ENCODE measurements at regions of chr15 and their contacts with region 1.

Region 1: GRCh38 chr15:49235446-49236124 is 65.5 kb downstream of the GALK2 start:
- DNase-seq: peak in 1 of 2 donors; percentile 59
- ATAC-seq: peak; percentile 87
- H3K4me3 ChIP-seq: no peak overlapping the region
- H3K27ac ChIP-seq: no peak overlapping the region
- H3K4me1 ChIP-seq: no peaks in the 10 kb centered on the region
- H3K27me3 ChIP-seq: no peaks in the 10 kb centered on the region

Region 2: GRCh38 chr15:49421991-49422390 is 186.4 kb after region 1 on chr15:
- intact Hi-C with region 1: loop called (anchors 5 kb)
- DNase-seq: peak; percentile 53 to 73
- ATAC-seq: peak; percentile 87
- H3K4me3 ChIP-seq: peak overlapping the region in 1 of 2 donors; percentile 34
- H3K27ac ChIP-seq: no peak overlapping the region
- H3K4me1 ChIP-seq: no peaks in the 10 kb centered on the region
- H3K27me3 ChIP-seq: no peaks in the 10 kb centered on the region

Region 3: GRCh38 chr15:49620658-49621368 is 385.2 kb after region 1 on chr15 and contains the starts of genes DTWD1 and FAM227B:
- intact Hi-C with region 1: no loop called
- DNase-seq: peak; percentile 98 to 99
- ATAC-seq: peak; percentile 100
- H3K4me3 ChIP-seq: peak within 1 kb of the TSS; percentile 86 to 92
- H3K27ac ChIP-seq: peak within 1 kb of the TSS; percentile 79 to 86
- H3K4me1 ChIP-seq: peaks cover 0 to 4% of the 10 kb centered on the region in 2 donors
- H3K27me3 ChIP-seq: no peaks in the 10 kb centered on the region
- total RNA-seq, gene DTWD1: 30.0 to 54.4 TPM
- total RNA-seq, gene FAM227B: 4.2 to 4.8 TPM

Region 4: DNA sequence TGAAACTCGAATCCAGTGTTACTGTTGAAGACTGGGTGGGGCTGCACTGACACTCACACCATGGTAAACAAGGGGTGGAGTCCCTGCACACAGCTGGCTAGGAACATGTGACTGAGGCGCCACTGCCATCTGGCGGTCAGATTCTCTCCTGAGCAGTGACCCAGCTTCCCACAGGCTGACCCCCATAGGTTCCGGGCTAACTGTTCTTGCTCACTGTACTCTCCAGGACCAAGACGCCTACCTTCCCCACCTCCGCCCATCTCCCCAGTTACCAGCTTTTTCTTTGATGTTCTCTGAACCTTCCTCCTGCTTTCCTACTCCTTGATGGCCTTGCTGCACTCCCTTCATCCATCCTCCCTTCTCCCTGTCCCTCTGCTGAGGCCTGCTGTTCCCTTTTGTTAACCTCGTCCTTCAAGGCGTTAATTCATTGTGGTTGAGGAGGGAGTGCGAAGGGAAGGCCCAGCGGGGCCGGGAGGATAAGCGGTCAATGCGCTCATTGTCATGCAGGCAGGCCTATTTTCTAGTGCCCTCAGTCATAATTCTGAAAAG is 768.3 kb after region 1 on chr15:
- intact Hi-C with region 1: loop called (anchors 5 kb)
- DNase-seq: peak; percentile 88 to 93
- ATAC-seq: peak; percentile 94
- H3K4me3 ChIP-seq: no peak overlapping the region
- H3K27ac ChIP-seq: no peak overlapping the region
- H3K4me1 ChIP-seq: no peaks in the 10 kb centered on the region
- H3K27me3 ChIP-seq: no peaks in the 10 kb centered on the region

Region 5: DNA sequence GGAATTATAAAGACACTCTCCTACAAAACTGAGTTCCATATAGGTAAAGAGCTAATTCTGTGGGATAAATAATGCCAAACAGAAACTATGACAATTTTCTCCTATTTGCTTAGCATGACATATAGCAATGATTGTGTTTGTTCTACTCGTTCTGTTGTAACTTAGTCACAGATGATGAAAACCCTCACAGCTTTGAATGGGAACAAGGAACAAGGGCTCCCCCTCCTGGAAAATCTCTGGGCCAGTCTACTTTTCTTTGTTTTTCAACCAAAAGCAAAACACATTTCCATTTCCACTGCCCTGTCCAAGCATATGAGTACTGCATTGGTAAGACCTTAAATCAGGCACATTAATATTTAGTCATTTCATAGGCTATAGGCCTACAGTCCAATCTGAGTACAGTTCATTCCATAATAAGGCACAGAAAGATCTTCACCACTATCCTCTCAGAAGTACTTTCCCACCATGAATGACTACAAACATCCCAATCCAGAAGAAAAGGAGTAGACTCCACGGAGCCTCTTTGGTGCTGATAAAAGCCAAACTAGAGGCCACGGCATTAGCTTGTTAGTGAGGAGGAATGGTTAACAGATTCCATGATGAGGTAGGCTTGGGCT is 816.3 kb after region 1 on chr15:
- intact Hi-C with region 1: loop called (anchors 5 kb)
- DNase-seq: peak in 1 of 2 donors; percentile 54
- ATAC-seq: peak; percentile 70
- H3K4me3 ChIP-seq: no peak overlapping the region
- H3K27ac ChIP-seq: no peak overlapping the region
- H3K4me1 ChIP-seq: no peaks in the 10 kb centered on the region
- H3K27me3 ChIP-seq: no peaks in the 10 kb centered on the region

Region 6: GRCh38 chr15:50145451-50145872 is 909.9 kb after region 1 on chr15:
- intact Hi-C with region 1: loop called (anchors 5 kb)
- DNase-seq: no peak
- ATAC-seq: peak; percentile 91
- H3K4me3 ChIP-seq: no peak overlapping the region
- H3K27ac ChIP-seq: no peak overlapping the region
- H3K4me1 ChIP-seq: no peaks in the 10 kb centered on the region
- H3K27me3 ChIP-seq: no peaks in the 10 kb centered on the region